Mammary epithelial cell (primary cell): ENCODE measurements at regions of chr15 and their contacts with region 1.

Region 1: DNA sequence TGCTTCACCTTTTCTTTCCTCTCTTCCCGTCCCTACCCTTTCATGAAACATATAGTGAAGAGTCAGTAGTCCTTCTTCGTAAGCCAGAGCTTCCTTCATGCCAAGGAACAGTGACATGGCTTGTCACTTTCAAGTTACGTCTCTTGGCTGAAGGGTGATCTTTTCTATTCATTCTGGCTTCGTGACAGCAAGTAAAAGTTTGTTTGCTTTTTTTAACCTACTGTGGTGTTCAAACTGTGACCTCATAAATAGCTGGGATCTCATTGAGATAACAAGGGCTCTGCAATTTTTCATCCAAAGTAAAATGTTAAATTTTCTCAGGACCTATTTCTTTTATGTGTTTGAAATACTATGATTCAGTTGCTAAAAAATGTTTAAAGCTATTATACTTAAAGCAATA is 10.5 kb downstream of the CDIN1 start:
- DNase-seq: no peak
- H3K4me3 ChIP-seq: no peak overlapping the region
- H3K27ac ChIP-seq: no peak overlapping the region
- H3K4me1 ChIP-seq: peaks cover 30% of the 10 kb centered on the region
- H3K27me3 ChIP-seq: no peaks in the 10 kb centered on the region
- CTCF ChIP-seq: no peak

Region 2: DNA sequence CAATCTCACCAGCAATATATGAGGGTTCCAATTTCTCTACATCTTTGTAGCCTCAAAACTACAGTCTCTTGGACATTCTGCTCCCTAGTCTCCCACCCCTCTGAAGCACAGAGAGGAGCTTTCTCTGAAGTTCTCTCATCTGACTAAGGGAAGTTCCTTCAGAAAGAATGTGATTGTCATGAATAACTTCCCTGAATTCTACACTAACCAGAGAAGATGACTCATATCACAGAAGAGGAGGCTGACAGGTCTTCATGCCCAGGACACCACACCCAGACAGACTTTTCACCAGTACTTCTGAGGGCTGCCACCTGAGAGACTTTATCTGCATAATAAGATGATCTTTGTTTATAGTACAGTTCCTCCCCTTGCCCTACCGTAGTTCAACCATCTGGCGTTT is 42.2 kb after region 1 on chr15:
- CTCF ChIA-PET with region 1: no interaction called
- dilution Hi-C with region 1: no loop called
- in situ Hi-C with region 1: no loop called
- intact Hi-C with region 1: loop called (anchors 5 kb)
- DNase-seq: peak; percentile 83
- H3K4me3 ChIP-seq: no peak overlapping the region
- H3K27ac ChIP-seq: peak overlapping the region; percentile 40
- H3K4me1 ChIP-seq: peaks cover 11% of the 10 kb centered on the region
- H3K27me3 ChIP-seq: no peaks in the 10 kb centered on the region
- CTCF ChIP-seq: no peak

Region 3: DNA sequence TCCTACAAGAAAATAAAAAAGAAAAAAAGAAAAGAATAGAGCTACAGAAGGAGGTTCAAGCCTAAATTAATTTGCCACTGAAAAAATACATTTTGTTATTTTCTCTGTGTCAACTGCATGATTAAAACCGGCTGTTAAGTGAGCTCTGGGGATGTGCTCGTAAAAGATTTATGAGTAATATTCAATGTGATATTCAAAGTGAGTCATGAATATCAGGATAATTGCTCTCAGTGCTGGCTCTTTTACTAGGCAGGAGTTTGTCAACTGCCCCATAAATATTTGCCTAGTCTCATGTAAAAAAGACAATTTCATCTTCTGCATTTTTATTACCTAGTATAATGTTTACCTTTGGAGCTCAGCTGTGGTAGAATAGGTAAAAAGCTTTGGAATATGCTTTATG is 68.3 kb after region 1 on chr15:
- CTCF ChIA-PET with region 1: no interaction called
- dilution Hi-C with region 1: no loop called
- in situ Hi-C with region 1: no loop called
- intact Hi-C with region 1: no loop called
- DNase-seq: peak; percentile 59
- H3K4me3 ChIP-seq: no peak overlapping the region
- H3K27ac ChIP-seq: no peak overlapping the region
- H3K4me1 ChIP-seq: peaks cover 7% of the 10 kb centered on the region
- H3K27me3 ChIP-seq: no peaks in the 10 kb centered on the region
- CTCF ChIP-seq: no peak

Region 4: DNA sequence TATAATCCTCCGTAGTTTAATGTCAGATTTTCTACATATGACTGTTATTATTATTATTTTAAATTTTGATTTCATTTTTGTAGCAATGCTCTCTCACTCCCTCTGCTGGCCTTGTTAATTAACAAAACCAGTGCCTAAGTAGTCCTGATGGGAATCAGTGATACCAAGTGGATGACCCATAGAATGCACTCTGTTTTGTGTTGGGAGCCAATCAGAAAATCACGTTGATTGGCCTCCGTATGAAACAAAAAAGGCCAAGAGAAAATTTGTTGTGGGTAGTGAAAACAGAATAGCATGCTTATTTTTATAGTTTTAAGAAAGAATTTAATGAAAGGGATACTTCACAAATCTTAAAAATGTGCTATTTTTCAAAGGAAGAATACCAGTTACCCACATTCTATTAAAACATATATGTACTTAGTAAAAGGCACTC is 544.7 kb after region 1 on chr15:
- CTCF ChIA-PET with region 1: no interaction called
- dilution Hi-C with region 1: no loop called
- in situ Hi-C with region 1: no loop called
- intact Hi-C with region 1: no loop called
- DNase-seq: peak; percentile 10
- H3K4me3 ChIP-seq: no peak overlapping the region
- H3K27ac ChIP-seq: no peak overlapping the region
- H3K4me1 ChIP-seq: no peaks in the 10 kb centered on the region
- H3K27me3 ChIP-seq: peaks cover 4% of the 10 kb centered on the region
- CTCF ChIP-seq: peak; percentile 64 to 67

Region 5: DNA sequence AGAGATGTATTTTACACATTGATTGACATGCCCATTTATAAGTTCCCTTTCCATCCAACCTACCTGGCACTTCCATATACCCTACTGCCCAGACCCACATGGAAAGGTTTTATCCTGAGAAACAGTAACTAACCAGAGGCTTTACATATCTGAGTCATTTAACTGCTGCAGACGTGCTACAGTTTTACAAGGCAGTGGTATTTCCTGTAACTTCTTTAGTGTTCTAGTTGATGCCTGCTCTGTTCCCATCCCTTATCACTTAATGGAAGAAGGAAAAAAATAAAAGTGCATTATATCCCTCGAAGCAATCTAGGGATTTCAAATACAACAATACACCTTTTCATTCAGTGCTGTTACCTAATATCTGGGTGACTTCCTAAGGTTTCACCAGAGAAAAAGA is 1451.6 kb after region 1 on chr15:
- CTCF ChIA-PET with region 1: no interaction called
- dilution Hi-C with region 1: no loop called
- in situ Hi-C with region 1: no loop called
- intact Hi-C with region 1: no loop called
- DNase-seq: peak; percentile 79
- H3K4me3 ChIP-seq: no peak overlapping the region
- H3K27ac ChIP-seq: peak overlapping the region; percentile 67
- H3K4me1 ChIP-seq: peaks cover 48% of the 10 kb centered on the region
- H3K27me3 ChIP-seq: no peaks in the 10 kb centered on the region
- CTCF ChIP-seq: no peak